Sigmoid colon (tissue), 7 donors: ENCODE measurements at regions of chr3 and their contacts with region 1.

Region 1: DNA sequence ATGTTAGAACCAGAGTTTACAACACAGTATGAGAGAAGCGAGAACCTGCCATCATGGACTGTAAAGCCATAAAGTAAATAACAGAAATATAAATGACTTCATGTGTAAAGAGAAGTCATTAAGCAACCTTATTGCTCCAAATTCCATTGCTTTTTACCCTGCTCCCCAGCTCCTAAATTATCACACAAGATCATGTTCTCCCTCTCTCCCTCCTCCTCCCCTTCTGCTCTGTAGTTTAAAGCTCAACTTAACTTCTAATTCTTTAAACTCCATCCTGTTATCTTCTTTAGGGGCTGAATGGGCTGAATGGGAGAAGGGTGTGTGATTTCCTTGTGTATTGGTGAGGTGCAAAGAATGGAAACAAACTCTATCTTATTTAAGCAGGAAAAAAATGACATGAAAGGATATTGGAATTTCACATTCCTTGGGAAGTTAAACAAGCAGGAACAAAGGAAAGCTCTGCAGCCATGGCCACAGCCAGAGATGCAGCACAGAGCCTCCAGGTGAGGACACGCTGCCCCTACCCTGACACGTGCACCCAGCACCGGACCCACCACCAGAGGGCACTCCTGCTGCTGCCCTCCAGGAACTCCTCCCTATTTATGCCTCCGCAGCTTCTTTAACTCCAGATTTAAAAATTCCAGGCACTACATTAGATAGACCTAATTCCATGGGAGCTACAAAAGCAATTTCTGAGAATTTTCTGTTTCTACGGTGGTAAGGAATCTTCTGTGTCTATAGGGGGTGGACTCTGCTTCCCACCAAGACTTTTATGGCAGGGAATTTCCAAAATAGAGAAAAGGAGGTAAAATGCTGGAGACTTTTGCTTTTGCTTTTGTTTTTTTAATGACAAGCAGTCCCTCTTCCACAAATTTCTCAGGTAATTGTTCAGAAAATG is 76.9 kb upstream of the ABI3BP start:
- DNase-seq: peak; percentile 68
- H3K4me3 ChIP-seq: no peak overlapping the region
- H3K27ac ChIP-seq: no peak overlapping the region
- H3K4me1 ChIP-seq: peaks cover 0 to 24% (median 14%) of the 10 kb centered on the region in 4 donors
- H3K27me3 ChIP-seq: no peaks in the 10 kb centered on the region
- CTCF ChIP-seq: peak in 3 of 4 experiments; percentile 49 to 62 (median 54)
- EP300 ChIP-seq: no peak
- POLR2A ChIP-seq: no peak

Region 2: GRCh38 chr3:100993309-100993708 is 76.8 kb before region 1 on chr3 and contains the start of gene ABI3BP:
- intact Hi-C with region 1: loop called (anchors 5 kb)
- DNase-seq: peak; percentile 93
- H3K4me3 ChIP-seq: peak within 1 kb of the TSS; percentile 38 to 51 (median 43)
- H3K27ac ChIP-seq: peak within 1 kb of the TSS; percentile 75 to 80 (median 78)
- H3K4me1 ChIP-seq: peaks cover 0 to 40% (median 32%) of the 10 kb centered on the region in 4 donors
- H3K27me3 ChIP-seq: no peaks in the 10 kb centered on the region
- CTCF ChIP-seq: no peak
- EP300 ChIP-seq: no peak
- POLR2A ChIP-seq: peak; percentile 38 to 47
- total RNA-seq, gene ABI3BP: 30.4 to 177 (median 77.9) TPM

Region 3: GRCh38 chr3:101253396-101253795 is 183.2 kb after region 1 on chr3:
- intact Hi-C with region 1: no loop called
- DNase-seq: no peak
- H3K4me3 ChIP-seq: no peak overlapping the region
- H3K27ac ChIP-seq: no peak overlapping the region
- H3K4me1 ChIP-seq: no peaks in the 10 kb centered on the region
- H3K27me3 ChIP-seq: no peaks in the 10 kb centered on the region
- CTCF ChIP-seq: no peak
- EP300 ChIP-seq: no peak
- POLR2A ChIP-seq: no peak